ENCODE measurements at regions of chr15 and their contacts with region 1.

Region 1: GRCh38 chr15:78108299-78109084 is 16.1 kb downstream of the SH2D7 start:
- DNase-seq: peak; percentile 87
- H3K4me3 ChIP-seq: peak overlapping the region in 1 of 2 experiments; percentile 4; a peak in 1 of 4 replicates
- H3K27ac ChIP-seq: no peak overlapping the region
- H3K4me1 ChIP-seq: no peaks in the 10 kb centered on the region; a peak in 1 of 4 replicates
- H3K27me3 ChIP-seq: no peaks in the 10 kb centered on the region
- CTCF ChIP-seq: peak; percentile 93
- EP300 ChIP-seq: no peak
- RAD21 ChIP-seq: peak; percentile 88

Region 2: DNA sequence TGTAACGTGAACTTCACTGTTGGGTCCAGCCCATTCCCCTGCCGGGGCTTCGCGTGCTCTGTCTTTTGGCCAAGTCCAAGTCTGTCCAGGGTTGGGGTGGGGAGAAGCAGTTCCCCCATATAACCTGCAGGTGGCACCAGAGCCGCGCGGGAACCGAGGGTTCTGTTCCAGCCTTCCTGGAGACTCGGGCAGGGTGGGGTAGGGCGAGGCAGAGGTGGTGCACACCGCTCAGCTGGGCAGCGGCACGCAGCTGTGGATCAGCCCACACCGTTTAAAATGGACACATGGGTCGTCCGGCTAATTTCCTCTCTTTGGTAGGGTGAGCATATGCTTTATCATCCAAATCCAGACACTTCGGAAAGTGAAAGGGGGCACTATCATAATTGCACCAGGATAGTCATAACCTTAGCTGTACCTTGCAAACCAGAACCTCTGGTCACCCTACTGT is 149.0 kb before region 1 on chr15:
- CTCF ChIA-PET with region 1: interaction called, 175 read pairs
- POLR2A ChIA-PET with region 1: interaction called, 7 read pairs
- DNase-seq: peak; percentile 91
- H3K4me3 ChIP-seq: peak overlapping the region; percentile 29 to 39; a peak in 2 of 4 replicates
- H3K27ac ChIP-seq: no peak overlapping the region
- H3K4me1 ChIP-seq: no peaks in the 10 kb centered on the region; a peak in 1 of 4 replicates
- H3K27me3 ChIP-seq: peaks cover 10% of the 10 kb centered on the region; the same call in 1 of the 2 replicates
- CTCF ChIP-seq: peak; percentile 90
- EP300 ChIP-seq: no peak
- RAD21 ChIP-seq: peak; percentile 93

Region 3: GRCh38 chr15:78000091-78000926 is 108.2 kb before region 1 on chr15:
- CTCF ChIA-PET with region 1: interaction called, 63 read pairs
- POLR2A ChIA-PET with region 1: interaction called, 4 read pairs
- DNase-seq: peak; percentile 80
- H3K4me3 ChIP-seq: no peak overlapping the region; a peak in 1 of 4 replicates
- H3K27ac ChIP-seq: no peak overlapping the region; a peak in 1 of 4 replicates
- H3K4me1 ChIP-seq: peaks cover 8 to 62% of the 10 kb centered on the region in 2 experiments; a peak in 3 of 4 replicates
- H3K27me3 ChIP-seq: no peaks in the 10 kb centered on the region
- CTCF ChIP-seq: peak; percentile 51
- EP300 ChIP-seq: no peak
- RAD21 ChIP-seq: peak; percentile 75

Region 4: GRCh38 chr15:78072080-78072892 is 36.2 kb before region 1 on chr15:
- CTCF ChIA-PET with region 1: interaction called, 39 read pairs
- POLR2A ChIA-PET with region 1: no interaction called
- DNase-seq: no peak
- H3K4me3 ChIP-seq: no peak overlapping the region
- H3K27ac ChIP-seq: peak overlapping the region; percentile 18 to 31; a peak in 2 of 4 replicates
- H3K4me1 ChIP-seq: peaks cover 54% of the 10 kb centered on the region in 2 experiments
- H3K27me3 ChIP-seq: no peaks in the 10 kb centered on the region
- CTCF ChIP-seq: no peak
- EP300 ChIP-seq: no peak
- RAD21 ChIP-seq: no peak

Region 5: DNA sequence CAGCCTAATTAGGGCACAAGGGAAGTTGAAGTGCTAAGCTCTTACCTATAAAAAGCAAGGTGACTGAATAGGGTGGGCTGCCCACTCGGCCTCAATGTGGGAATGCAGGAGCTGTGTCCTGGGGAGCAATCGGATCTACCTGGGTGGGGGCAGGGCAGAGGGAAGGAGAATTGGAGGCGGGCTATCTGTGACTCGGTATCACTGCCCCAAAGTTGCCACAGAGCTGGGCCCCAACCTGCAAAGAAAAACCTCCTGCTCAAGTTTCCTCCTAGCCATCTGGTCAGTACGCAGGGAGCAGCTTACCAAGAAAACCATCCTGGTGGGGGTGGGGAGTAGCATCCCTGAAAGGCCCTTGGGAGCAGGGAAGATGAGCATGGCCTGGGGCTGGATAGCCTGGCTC is 12.0 kb after region 1 on chr15:
- CTCF ChIA-PET with region 1: interaction called, 21 read pairs
- POLR2A ChIA-PET with region 1: no interaction called
- DNase-seq: no peak
- H3K4me3 ChIP-seq: no peak overlapping the region
- H3K27ac ChIP-seq: no peak overlapping the region
- H3K4me1 ChIP-seq: no peaks in the 10 kb centered on the region
- H3K27me3 ChIP-seq: no peaks in the 10 kb centered on the region
- CTCF ChIP-seq: no peak
- EP300 ChIP-seq: no peak
- RAD21 ChIP-seq: no peak

Region 6: GRCh38 chr15:78195735-78196201 is 87.3 kb after region 1 on chr15:
- CTCF ChIA-PET with region 1: interaction called, 82 read pairs
- POLR2A ChIA-PET with region 1: no interaction called
- DNase-seq: peak; percentile 80
- H3K4me3 ChIP-seq: no peak overlapping the region
- H3K27ac ChIP-seq: no peak overlapping the region
- H3K4me1 ChIP-seq: no peaks in the 10 kb centered on the region
- H3K27me3 ChIP-seq: no peaks in the 10 kb centered on the region
- CTCF ChIP-seq: peak; percentile 62
- EP300 ChIP-seq: no peak
- RAD21 ChIP-seq: peak; percentile 72

Measured in SK-N-SH (cell line).